B cell (primary cell): ENCODE measurements at regions of chr12 and their contacts with region 1.

Region 1: DNA sequence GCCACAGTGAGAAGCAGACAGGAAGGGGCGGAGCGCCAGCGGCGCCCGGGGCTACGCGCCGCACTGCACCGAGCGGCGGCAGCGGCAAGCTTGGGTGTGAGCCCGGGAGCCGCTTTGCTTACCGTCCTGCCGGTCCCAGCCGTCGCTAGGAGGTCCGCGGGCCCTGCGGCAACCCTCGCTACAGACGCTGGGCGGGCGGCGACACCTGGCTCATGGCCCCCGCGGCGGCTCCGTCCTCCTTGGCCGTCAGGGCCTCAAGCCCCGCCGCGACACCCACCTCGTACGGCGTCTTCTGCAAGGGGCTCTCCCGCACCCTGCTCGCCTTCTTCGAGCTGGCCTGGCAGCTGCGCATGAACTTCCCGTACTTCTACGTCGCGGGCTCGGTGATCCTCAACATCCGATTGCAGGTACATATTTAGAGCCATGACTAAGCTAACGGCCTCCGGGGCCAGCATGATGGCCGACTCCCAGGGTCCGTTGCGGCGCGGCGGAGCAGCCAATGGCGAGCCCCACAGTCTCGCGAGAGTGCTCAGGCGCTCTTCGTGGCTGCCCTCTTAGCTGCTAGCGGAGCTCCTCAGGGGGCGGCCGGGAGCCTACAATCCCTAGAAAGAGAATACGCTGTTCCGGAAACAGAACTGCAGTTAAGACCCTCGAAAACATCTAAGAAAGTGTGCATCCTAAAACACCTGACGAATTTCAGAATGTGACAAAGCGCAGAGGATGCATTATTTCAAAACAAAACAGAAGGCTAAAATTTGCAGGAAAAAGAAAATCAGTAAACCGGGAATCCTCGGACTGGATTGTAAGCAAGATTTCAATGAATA is at the start of gene SMIM10L1:
- DNase-seq: peak; percentile 93
- ATAC-seq: peak; percentile 95
- H3K4me3 ChIP-seq: peak within 1 kb of the TSS; percentile 43 to 75 (median 61)
- H3K4me3 Mint-ChIP-seq: peak within 1 kb of the TSS; percentile 99
- H3K27ac ChIP-seq: peak within 1 kb of the TSS; percentile 53 to 71
- H3K27ac Mint-ChIP-seq: peak within 1 kb of the TSS; percentile 97
- H3K4me1 ChIP-seq: peaks cover 22 to 25% of the 10 kb centered on the region in 2 donors
- H3K4me1 Mint-ChIP-seq: peaks cover 44% of the 10 kb centered on the region
- H3K27me3 ChIP-seq: no peaks in the 10 kb centered on the region
- H3K27me3 Mint-ChIP-seq: no peaks in the 10 kb centered on the region
- CTCF ChIP-seq: no peak
- total RNA-seq, gene SMIM10L1: 9.6 and 10.1 TPM in 2 replicates

Region 2: GRCh38 chr12:10364815-10365622 is 806.3 kb before region 1 on chr12:
- CTCF ChIA-PET with region 1: no interaction called
- POLR2A ChIA-PET with region 1: no interaction called
- intact Hi-C with region 1: loop called (anchors 2 kb)
- DNase-seq: peak; percentile 87
- ATAC-seq: peak; percentile 73
- H3K4me3 ChIP-seq: peak overlapping the region; percentile 72 to 98 (median 95)
- H3K4me3 Mint-ChIP-seq: no peak overlapping the region
- H3K27ac ChIP-seq: peak overlapping the region; percentile 91 to 93
- H3K27ac Mint-ChIP-seq: no peak overlapping the region
- H3K4me1 ChIP-seq: peaks cover 32 to 46% of the 10 kb centered on the region in 2 donors
- H3K4me1 Mint-ChIP-seq: peaks cover 2% of the 10 kb centered on the region
- H3K27me3 ChIP-seq: no peaks in the 10 kb centered on the region
- H3K27me3 Mint-ChIP-seq: no peaks in the 10 kb centered on the region
- CTCF ChIP-seq: no peak

Region 3: GRCh38 chr12:11238275-11238674 is 66.9 kb after region 1 on chr12:
- CTCF ChIA-PET with region 1: no interaction called
- POLR2A ChIA-PET with region 1: no interaction called
- intact Hi-C with region 1: no loop called
- DNase-seq: no peak
- ATAC-seq: no peak
- H3K4me3 ChIP-seq: no peak overlapping the region
- H3K4me3 Mint-ChIP-seq: no peak overlapping the region
- H3K27ac ChIP-seq: no peak overlapping the region
- H3K27ac Mint-ChIP-seq: no peak overlapping the region
- H3K4me1 ChIP-seq: no peaks in the 10 kb centered on the region
- H3K4me1 Mint-ChIP-seq: no peaks in the 10 kb centered on the region
- H3K27me3 ChIP-seq: no peaks in the 10 kb centered on the region
- H3K27me3 Mint-ChIP-seq: no peaks in the 10 kb centered on the region
- CTCF ChIP-seq: no peak

Region 4: DNA sequence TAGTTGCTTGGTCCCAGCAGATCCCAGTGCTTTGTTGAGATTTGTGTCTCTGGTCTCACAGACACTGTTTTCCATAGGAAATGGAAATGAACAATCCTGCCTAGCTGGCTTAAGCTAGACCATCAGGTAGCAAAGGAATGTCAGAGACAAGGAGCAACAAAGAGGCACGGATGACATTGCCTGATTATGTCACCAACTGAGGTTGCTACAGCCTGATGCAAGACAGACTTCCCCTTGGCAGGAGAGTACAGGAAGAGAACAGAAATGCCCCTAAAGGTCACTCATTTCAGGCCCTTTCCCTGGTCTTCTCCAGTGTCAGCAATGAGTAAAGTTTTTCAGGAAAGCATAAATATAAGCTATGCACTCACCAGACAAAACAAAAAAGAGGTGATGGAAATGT is 226.0 kb after region 1 on chr12:
- CTCF ChIA-PET with region 1: no interaction called
- POLR2A ChIA-PET with region 1: no interaction called
- intact Hi-C with region 1: no loop called
- DNase-seq: no peak
- ATAC-seq: no peak
- H3K4me3 ChIP-seq: no peak overlapping the region
- H3K4me3 Mint-ChIP-seq: no peak overlapping the region
- H3K27ac ChIP-seq: no peak overlapping the region
- H3K27ac Mint-ChIP-seq: no peak overlapping the region
- H3K4me1 ChIP-seq: no peaks in the 10 kb centered on the region
- H3K4me1 Mint-ChIP-seq: no peaks in the 10 kb centered on the region
- H3K27me3 ChIP-seq: no peaks in the 10 kb centered on the region
- H3K27me3 Mint-ChIP-seq: peaks cover 6% of the 10 kb centered on the region
- CTCF ChIP-seq: no peak